BJ (cell line): ENCODE measurements at regions of chr4 and their contacts with region 1.

Region 1: GRCh38 chr4:80989921-80990544 is 40.5 kb upstream of the BMP3 start:
- DNase-seq: no peak
- H3K4me3 ChIP-seq: no peak overlapping the region
- H3K27me3 ChIP-seq: no peaks in the 10 kb centered on the region
- CTCF ChIP-seq: peak; percentile 68

Region 2: GRCh38 chr4:80360084-80360483 is 629.9 kb before region 1 on chr4:
- CTCF ChIA-PET with region 1: interaction called, 39 read pairs
- POLR2A ChIA-PET with region 1: no interaction called
- DNase-seq: no peak
- H3K4me3 ChIP-seq: no peak overlapping the region
- H3K27me3 ChIP-seq: no peaks in the 10 kb centered on the region
- CTCF ChIP-seq: no peak

Region 3: GRCh38 chr4:80365928-80366327 is 624.1 kb before region 1 on chr4:
- CTCF ChIA-PET with region 1: interaction called, 39 read pairs
- POLR2A ChIA-PET with region 1: no interaction called
- DNase-seq: no peak
- H3K4me3 ChIP-seq: no peak overlapping the region
- H3K27me3 ChIP-seq: no peaks in the 10 kb centered on the region
- CTCF ChIP-seq: peak; percentile 78